ENCODE measurements at regions of chr10 and their contacts with region 1.

Region 1: DNA sequence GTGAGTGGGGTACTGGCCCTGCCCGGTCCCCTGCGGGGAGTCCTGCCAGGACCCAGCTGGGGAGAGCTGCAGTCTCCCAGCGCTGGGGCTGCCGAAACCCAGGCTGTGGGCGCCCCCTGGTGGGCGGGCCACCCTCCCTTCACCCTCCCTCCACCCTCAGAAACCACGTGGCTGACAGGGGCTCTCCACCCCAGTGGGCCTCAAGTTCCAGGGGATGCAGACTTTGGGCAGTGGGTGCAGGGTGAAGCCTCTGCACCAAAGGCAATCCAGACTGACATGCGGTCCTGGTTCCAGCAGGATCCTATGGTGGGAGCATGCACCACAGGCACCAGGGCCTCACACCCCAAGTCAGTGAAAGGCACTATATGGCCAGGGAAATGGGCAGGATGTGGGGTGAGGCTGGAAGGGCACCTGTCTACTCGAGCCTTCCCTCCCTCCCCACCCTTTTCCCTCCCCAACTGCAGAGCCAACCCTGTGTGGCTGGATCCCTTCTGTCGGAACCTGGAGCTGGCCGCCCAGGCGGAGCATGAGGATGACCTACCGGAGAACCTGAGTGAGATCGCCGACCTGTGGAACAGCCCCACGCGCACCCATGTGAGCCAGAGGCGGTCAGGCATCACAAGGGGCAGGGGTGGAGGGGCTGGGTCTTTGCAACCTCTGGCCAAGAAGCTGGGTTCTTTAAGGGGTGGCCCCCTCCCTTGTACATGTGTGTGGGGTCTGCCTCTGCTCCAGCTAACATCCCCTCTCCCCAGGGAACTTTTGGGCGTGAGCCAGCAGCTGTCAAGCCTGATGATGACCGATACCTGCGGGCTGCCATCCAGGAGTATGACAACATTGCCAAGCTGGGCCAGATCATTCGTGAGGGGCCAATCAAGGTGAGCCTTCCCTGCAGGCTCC is 38.8 kb downstream of the PSAP start:
- DNase-seq: no peak
- H3K4me3 ChIP-seq: no peak overlapping the region
- CTCF ChIP-seq: peak; percentile 93

Region 2: DNA sequence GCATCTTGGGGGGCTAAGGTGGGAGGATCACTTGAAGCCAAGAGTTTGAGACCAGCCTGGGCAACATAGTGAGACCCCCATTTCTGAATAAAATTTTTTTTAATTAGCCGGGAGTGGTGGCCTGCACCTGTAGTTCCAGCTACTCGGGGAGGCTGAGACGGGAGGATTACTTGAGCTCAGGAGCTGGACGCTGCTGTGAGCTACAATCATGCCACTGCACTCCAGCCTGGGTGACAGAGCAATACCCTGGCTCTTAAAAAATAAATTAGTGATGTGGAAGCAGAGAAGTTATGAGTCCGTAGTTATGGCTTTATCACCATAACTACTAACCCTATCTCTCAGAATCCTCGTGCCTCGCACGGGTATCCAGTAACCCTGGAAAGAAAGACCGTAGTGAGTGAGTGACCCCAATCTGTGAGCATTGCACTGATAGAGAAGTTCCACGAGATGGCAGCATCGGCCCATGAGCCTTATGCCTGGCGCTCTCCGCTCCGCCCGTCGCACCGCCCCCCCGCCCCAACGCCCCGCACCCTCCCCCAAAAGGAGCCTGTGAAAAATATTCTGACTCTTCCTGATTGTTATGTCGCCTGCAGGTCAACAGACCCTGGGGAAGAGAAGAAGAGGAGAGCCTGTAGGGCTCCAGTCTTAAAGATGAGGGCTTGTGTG is 498.1 kb before region 1 on chr10:
- CTCF ChIA-PET with region 1: interaction called, 32 read pairs
- POLR2A ChIA-PET with region 1: no interaction called
- DNase-seq: no peak
- H3K4me3 ChIP-seq: no peak overlapping the region
- CTCF ChIP-seq: peak; percentile 70

Region 3: DNA sequence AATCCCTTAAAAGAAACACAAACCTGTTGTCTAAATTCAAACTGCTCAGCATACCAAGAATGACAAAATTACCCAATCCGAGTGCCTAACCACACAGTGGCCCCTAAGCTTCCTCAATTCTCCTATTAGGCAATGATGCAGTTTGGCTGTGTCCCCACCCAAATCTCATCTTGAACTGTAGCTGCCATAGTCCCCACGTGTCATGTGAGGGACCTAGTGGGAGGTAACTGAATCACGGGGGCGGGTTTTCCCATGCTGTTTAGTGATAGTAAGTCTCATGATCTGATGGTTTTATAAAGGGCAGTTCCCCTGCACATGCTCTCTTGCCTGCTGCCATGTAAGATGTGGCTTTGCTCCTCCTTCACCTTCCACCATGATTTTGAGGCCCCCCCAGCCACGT is 16.9 kb after region 1 on chr10:
- CTCF ChIA-PET with region 1: interaction called, 16 read pairs
- POLR2A ChIA-PET with region 1: no interaction called
- DNase-seq: no peak
- H3K4me3 ChIP-seq: no peak overlapping the region
- CTCF ChIP-seq: no peak